ENCODE measurements at regions of chr6 and their contacts with region 1.

Region 1: GRCh38 chr6:22343859-22344258 is 47.0 kb upstream of the PRL start:
- DNase-seq: no peak
- ATAC-seq: no peak
- H3K4me3 ChIP-seq: no peak overlapping the region
- H3K27ac ChIP-seq: no peak overlapping the region
- H3K4me1 ChIP-seq: no peaks in the 10 kb centered on the region
- H3K27me3 ChIP-seq: no peaks in the 10 kb centered on the region
- CTCF ChIP-seq: no peak
- EP300 ChIP-seq: no peak
- POLR2A ChIP-seq: no peak
- RAD21 ChIP-seq: no peak

Region 2: DNA sequence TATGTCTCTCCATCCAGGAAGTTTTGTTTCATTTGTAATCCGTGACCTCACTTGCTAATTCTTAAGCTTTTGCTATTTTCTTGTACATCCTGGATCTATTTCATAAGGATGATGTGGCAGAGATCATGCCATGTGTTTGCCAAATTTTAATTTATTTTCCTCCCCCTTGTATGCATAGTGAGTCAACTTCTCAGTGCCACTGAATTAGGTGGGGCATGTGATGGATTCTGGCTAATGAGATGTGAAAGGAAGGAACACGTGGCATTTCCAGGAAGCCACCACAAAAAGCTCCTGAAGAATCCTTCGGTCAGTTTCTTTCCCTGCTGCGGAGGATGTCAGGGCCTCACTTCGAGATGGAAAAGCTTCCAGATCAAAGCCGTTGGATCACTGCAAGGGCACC is 39.2 kb after region 1 on chr6:
- CTCF ChIA-PET with region 1: no interaction called
- POLR2A ChIA-PET with region 1: no interaction called
- in situ Hi-C with region 1: no loop called
- intact Hi-C with region 1: loop called (anchors 1 kb)
- DNase-seq: no peak
- ATAC-seq: no peak
- H3K4me3 ChIP-seq: no peak overlapping the region
- H3K27ac ChIP-seq: no peak overlapping the region
- H3K4me1 ChIP-seq: no peaks in the 10 kb centered on the region
- H3K27me3 ChIP-seq: no peaks in the 10 kb centered on the region
- CTCF ChIP-seq: no peak
- EP300 ChIP-seq: no peak
- POLR2A ChIP-seq: no peak
- RAD21 ChIP-seq: no peak

Measured in K562 (cell line).